Common myeloid progenitor, CD34-positive (primary cell): ENCODE measurements at regions of chr1 and their contacts with region 1.

Region 1: DNA sequence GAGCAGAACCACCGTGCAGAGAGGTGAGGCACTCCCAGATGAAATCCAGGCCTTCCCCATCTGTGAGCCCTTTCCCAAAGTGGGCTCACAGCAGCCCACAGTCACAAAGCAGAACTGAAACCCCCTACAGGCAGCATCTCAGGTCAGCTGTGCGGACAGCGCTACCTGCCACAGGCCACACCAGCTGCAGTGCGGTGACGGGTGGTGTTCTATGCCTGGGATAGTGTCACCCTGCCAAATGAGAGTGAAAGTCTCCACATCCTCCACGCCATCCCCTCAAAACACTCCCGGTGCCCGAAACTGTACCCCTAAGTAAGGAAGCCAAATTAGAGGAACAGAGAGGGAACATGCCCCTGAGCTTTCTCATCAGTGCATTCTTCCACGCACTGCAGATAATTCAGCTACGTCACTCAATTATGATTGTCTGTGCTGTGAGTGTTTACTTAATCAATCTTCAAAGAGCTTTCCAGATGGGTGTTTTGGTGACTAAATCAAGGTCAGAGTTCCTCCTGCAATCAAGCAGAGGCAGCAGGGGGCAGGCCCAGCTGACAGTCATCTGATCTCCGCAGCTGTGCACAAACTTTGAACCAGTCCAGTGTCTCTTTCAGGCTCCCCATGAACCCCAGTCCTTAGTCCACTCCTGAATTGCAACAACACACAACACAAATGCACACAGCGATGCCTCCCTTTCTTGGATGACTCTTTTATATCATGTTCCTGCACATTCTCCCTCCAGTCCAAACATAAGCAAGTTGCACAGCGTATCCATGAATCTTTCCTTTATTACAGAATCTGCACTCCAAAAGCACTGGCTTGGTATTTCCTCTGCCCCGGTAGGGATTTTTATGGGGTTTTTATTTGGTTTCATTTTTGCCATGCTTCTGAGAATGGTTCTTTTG is 150.0 kb downstream of the TOMM20 start:
- DNase-seq: peak in 2 of 3 donors; percentile 85 to 87
- H3K4me3 ChIP-seq: peak overlapping the region in 2 of 7 experiments; percentile 8 to 41
- H3K27ac ChIP-seq: peak overlapping the region; percentile 94 to 98
- H3K4me1 ChIP-seq: peaks cover 42 to 97% (median 83%) of the 10 kb centered on the region in 4 experiments
- H3K27me3 ChIP-seq: no peaks in the 10 kb centered on the region

Region 2: GRCh38 chr1:234963180-234963903 is 15.3 kb before region 1 on chr1:
- CTCF ChIA-PET with region 1: interaction called, 69 read pairs
- POLR2A ChIA-PET with region 1: interaction called, 24 read pairs
- DNase-seq: peak; percentile 97 to 99 (median 98)
- H3K4me3 ChIP-seq: peak overlapping the region in 4 of 7 experiments; percentile 13 to 63 (median 56)
- H3K27ac ChIP-seq: peak overlapping the region; percentile 94 to 97
- H3K4me1 ChIP-seq: peaks cover 52 to 79% (median 67%) of the 10 kb centered on the region in 4 experiments
- H3K27me3 ChIP-seq: no peaks in the 10 kb centered on the region

Region 3: DNA sequence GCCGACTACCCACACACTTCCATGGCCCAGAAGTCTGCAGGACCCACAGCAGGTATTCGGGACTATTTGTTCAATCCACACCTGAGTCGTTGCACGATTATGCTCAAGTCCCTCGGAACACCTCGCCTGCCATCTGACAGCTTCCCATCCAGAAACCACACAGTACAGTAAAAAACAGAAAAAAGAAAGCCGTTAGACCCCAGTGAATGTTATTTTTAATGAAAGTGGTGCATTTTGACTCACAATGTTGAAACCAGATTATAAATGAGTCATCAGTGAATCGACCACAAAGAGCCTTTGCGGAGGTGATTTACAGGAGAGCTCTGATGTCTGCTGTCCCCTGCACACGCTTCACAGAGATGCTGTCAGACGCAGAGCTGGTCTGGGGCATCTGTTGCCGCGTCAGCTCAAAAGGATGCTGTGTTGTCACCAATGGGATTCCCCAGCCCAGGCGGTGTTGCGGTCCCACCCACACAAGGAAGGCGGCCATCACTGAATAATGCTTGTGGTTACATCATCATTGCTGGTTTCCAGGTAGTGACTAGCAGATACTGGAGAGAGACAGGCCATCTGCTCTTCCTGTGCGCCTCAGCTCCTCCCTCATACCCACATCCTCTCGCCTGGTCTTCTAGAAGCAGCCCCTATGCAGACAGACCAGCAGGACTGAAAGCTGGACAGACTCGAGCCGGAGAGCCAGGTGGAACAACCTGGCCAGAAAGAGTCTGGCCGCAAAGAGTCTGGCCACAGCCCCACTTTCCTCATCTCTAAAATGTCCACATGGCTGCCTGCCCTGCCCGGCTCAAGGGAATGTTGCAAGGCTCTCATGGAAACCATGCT is 33.2 kb after region 1 on chr1:
- CTCF ChIA-PET with region 1: interaction called, 12 read pairs
- POLR2A ChIA-PET with region 1: interaction called, 27 read pairs
- DNase-seq: peak; percentile 99 to 100 (median 100)
- H3K4me3 ChIP-seq: peak overlapping the region in 4 of 7 experiments; percentile 15 to 44 (median 30)
- H3K27ac ChIP-seq: peak overlapping the region; percentile 91 to 94
- H3K4me1 ChIP-seq: peaks cover 3 to 52% (median 40%) of the 10 kb centered on the region in 4 experiments
- H3K27me3 ChIP-seq: no peaks in the 10 kb centered on the region

Region 4: DNA sequence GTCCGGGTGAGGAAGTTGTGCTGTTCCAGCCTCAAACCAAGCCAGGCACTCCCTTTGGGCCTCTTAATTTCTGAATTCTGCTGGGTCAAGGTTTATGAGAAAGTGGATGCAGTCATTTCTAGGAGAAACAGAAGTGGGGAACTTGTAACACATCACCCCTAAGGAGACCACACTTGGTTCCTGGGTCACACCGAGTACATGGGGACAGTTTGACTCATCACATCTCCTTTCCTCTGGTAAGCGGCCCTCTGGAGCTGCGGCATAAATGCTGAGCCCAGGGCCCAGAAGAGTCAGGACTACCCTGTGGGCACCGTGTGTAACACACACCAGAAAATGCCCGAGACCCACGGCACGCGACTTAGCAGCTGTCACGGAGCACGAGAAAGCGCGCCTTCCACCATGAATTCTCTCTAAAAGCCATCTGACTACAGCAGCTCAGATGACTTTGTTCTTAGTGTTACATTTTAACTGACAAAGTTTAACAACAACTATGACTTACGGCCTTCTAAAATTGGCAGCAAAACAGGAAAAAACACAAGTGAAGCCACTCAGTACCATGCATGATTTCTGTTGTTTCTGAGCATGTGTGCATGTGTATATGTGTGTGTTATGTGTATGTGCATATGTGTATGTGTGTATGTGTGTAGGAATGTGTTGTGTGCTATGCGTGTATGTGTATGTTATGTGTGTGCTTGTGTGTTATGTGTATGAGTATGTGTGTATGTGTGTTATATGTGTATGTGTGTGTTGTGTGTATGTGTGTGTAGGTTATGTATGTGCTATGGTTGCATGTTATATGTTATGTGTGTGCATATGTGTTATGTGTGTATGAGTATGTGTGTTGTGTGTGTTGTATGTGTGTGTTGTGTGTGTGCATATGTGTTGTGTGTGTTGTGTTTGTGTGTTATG is 99.2 kb after region 1 on chr1:
- CTCF ChIA-PET with region 1: interaction called, 25 read pairs
- POLR2A ChIA-PET with region 1: interaction called, 11 read pairs
- DNase-seq: peak in 2 of 3 donors; percentile 67 to 80
- H3K4me3 ChIP-seq: no peak overlapping the region
- H3K27ac ChIP-seq: no peak overlapping the region
- H3K4me1 ChIP-seq: peaks cover 8 to 69% (median 60%) of the 10 kb centered on the region in 4 experiments
- H3K27me3 ChIP-seq: no peaks in the 10 kb centered on the region

Region 5: DNA sequence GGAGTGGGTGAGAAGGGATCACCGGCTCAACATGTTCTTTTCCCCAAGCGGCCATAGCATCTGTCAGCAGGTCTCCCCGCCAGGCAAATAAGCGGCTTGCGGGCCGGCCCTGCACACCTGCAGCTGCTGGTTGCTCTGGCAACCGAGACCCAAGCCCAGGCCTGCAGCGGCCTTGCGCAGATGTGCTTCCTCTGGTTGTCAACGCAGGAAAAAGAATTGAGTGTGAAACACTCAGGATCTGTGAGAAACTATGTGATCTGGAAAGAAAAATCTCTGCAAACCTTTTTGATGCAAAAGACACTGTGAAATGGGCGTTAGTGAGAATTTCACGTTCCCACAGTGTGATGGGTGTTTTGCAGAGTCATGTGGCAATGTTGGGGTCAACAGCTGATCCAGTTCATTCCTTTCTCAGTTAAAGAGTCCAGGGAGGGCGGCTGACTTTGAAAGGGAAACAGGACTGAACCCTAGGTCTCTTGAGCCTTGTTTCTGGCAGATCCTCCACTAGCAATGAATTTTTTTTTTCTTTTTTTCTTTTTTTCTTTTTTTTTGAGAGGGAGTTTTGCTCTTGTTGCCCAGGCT is 121.6 kb after region 1 on chr1:
- CTCF ChIA-PET with region 1: no interaction called
- POLR2A ChIA-PET with region 1: no interaction called
- DNase-seq: no peak
- H3K4me3 ChIP-seq: no peak overlapping the region
- H3K27ac ChIP-seq: no peak overlapping the region
- H3K4me1 ChIP-seq: peaks cover 0 to 12% (median 9%) of the 10 kb centered on the region in 4 experiments
- H3K27me3 ChIP-seq: no peaks in the 10 kb centered on the region